ENCODE measurements at regions of chr3 and their contacts with region 1.

Region 1: DNA sequence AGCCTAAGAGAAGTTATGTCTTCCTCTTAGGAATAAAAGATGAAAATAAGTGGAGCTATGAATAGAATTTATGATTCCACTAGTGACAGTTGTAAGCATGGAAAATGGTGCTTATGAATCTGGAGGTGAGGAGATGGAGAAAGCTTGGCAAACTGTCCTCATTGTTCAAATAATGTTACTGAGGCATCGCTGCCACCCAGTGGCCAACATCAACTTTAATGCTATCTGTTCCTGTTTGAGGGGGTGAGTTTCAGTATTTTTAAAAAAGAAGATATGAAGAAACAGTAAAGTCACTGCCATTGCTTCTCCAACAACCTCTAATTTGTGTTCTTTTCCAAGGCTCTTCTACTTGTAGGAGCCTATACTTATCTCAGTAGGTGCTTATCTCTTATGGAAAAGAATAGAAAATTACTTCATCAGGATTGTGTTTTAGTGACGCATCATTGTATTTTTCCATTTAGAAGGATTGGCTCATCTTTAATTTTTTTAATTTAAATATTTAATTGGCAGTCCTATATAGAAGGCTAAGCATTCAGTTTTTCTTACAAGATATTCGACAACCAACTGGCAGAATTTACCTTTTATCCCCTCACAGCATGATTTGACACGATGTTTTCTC is 260.4 kb upstream of the P2RY1 start:
- DNase-seq: peak; percentile 26
- ATAC-seq: peak; percentile 95
- H3K4me3 ChIP-seq: no peak overlapping the region
- H3K27ac ChIP-seq: no peak overlapping the region
- H3K4me1 ChIP-seq: no peaks in the 10 kb centered on the region; the same call in 1 of the 2 replicates
- H3K27me3 ChIP-seq: no peaks in the 10 kb centered on the region
- CTCF ChIP-seq: peak; percentile 38 to 69 (median 52); a peak in 5 of 6 replicates
- EP300 ChIP-seq: no peak
- POLR2A ChIP-seq: no peak
- RAD21 ChIP-seq: peak; percentile 87

Region 2: GRCh38 chr3:152452318-152452717 is 122.3 kb before region 1 on chr3:
- CTCF ChIA-PET with region 1: no interaction called
- POLR2A ChIA-PET with region 1: no interaction called
- RAD21 ChIA-PET with region 1: no interaction called
- SMC1A ChIA-PET with region 1: no interaction called
- in situ Hi-C with region 1: no loop called
- intact Hi-C with region 1: no loop called
- DNase-seq: no peak
- ATAC-seq: peak; percentile 24; the same call in 2 of the 3 replicates
- H3K4me3 ChIP-seq: no peak overlapping the region
- H3K27ac ChIP-seq: no peak overlapping the region
- H3K4me1 ChIP-seq: no peaks in the 10 kb centered on the region
- H3K27me3 ChIP-seq: no peaks in the 10 kb centered on the region
- CTCF ChIP-seq: no peak
- EP300 ChIP-seq: no peak
- POLR2A ChIP-seq: no peak
- RAD21 ChIP-seq: no peak

Region 3: GRCh38 chr3:152519376-152519775 is 55.2 kb before region 1 on chr3:
- CTCF ChIA-PET with region 1: interaction called, 48 read pairs
- POLR2A ChIA-PET with region 1: no interaction called
- RAD21 ChIA-PET with region 1: interaction called, 13 read pairs
- SMC1A ChIA-PET with region 1: interaction called, 18 read pairs
- in situ Hi-C with region 1: no loop called
- intact Hi-C with region 1: loop called (anchors 1 kb)
- DNase-seq: no peak
- ATAC-seq: peak; percentile 72
- H3K4me3 ChIP-seq: no peak overlapping the region
- H3K27ac ChIP-seq: no peak overlapping the region
- H3K4me1 ChIP-seq: peaks cover 5% of the 10 kb centered on the region
- H3K27me3 ChIP-seq: no peaks in the 10 kb centered on the region
- CTCF ChIP-seq: no peak
- EP300 ChIP-seq: no peak; a peak in 1 of 4 replicates
- POLR2A ChIP-seq: no peak
- RAD21 ChIP-seq: no peak

Region 4: DNA sequence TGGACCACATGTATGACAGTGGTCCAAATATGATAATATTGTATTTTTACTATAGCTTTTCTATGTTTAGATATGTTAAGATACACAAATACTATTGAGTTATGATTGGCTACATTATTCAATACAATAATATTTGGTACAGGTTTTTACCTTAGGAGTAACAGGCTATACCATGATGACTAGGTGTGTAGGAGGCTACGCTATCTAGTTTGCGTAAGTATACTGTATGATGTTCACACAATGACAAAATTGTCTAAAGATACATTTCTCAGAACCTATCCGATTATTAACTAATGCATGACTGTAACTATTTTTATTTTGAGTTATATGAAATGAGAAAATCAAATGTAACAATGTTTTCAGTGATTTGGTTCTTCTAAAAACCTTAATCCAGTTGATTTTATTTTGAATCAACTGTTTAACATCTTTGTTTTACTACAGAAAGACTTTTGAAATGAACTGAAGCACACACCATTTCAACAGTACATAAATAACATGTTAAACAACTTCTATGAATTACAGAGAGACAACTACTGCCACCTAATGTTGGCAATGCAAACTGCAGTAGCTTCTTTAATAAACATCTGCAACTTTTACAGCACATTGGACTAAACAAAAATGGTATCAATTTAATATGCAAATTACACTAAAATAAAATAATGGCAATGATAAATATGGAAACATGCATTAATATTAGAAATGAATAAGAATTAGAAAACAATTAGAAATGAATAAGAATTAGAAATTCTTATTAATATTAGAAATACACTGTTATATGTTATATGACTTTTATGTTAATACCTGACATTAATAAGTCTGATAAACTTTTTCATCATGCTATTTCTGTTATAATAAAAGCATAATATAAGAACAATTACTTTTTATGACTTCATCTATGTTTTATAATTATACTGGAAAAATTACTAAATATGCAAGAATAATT is 50.1 kb before region 1 on chr3:
- CTCF ChIA-PET with region 1: interaction called, 48 read pairs
- POLR2A ChIA-PET with region 1: no interaction called
- RAD21 ChIA-PET with region 1: interaction called, 13 read pairs
- SMC1A ChIA-PET with region 1: interaction called, 18 read pairs
- in situ Hi-C with region 1: no loop called
- intact Hi-C with region 1: loop called (anchors 1 kb)
- DNase-seq: no peak
- ATAC-seq: peak; percentile 74
- H3K4me3 ChIP-seq: no peak overlapping the region
- H3K27ac ChIP-seq: no peak overlapping the region
- H3K4me1 ChIP-seq: no peaks in the 10 kb centered on the region
- H3K27me3 ChIP-seq: no peaks in the 10 kb centered on the region
- CTCF ChIP-seq: peak; percentile 69 to 80 (median 79); a peak in 5 of 6 replicates
- EP300 ChIP-seq: no peak
- POLR2A ChIP-seq: no peak
- RAD21 ChIP-seq: peak; percentile 90

Region 5: DNA sequence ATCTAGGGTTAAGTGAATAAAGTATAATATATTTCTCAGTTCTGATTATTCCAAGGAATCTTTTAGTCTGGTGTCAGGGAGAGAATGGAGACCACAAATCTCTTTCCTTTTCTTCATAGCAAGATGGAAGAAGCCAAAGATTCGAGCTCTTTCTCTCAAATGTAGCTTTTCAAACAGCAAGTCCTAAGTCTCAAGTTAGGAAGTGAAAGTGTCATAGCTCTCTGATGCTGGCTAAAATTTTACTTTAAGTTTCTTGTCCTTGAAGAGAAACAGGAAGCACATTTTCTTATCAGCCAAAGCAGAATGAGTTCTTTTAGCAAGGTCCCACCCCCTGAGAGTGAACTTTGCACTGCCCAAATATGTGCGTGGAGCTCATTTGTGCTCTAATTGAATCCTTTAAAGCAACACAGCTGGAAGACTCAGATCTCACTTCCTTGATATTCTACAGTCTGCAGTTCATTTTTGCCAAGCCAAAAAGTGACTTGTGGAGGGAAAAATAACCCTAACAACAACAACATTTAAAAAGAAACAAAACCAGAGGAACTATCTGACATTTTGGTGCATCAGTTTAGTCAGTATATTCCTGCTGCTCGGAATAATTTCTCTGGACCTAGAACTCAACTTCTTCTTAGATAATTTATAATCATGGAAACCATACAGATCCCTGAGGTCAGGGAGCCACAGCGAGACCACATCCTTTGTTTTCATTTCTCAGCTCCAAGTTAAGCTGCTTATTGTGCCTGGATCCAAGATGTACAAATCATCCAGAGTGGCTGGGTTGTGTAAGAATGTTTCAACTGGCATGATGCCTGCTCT is 21.6 kb after region 1 on chr3:
- CTCF ChIA-PET with region 1: interaction called, 31 read pairs
- POLR2A ChIA-PET with region 1: no interaction called
- RAD21 ChIA-PET with region 1: interaction called, 11 read pairs
- SMC1A ChIA-PET with region 1: interaction called, 32 read pairs
- in situ Hi-C with region 1: no loop called
- intact Hi-C with region 1: no loop called
- DNase-seq: peak; percentile 88
- ATAC-seq: peak; percentile 99
- H3K4me3 ChIP-seq: no peak overlapping the region
- H3K27ac ChIP-seq: peak overlapping the region; percentile 16
- H3K4me1 ChIP-seq: peaks cover 7% of the 10 kb centered on the region
- H3K27me3 ChIP-seq: no peaks in the 10 kb centered on the region
- CTCF ChIP-seq: no peak
- EP300 ChIP-seq: no peak; a peak in 2 of 4 replicates
- POLR2A ChIP-seq: no peak
- RAD21 ChIP-seq: no peak

Region 6: GRCh38 chr3:153469162-153469561 is 894.6 kb after region 1 on chr3:
- CTCF ChIA-PET with region 1: no interaction called
- POLR2A ChIA-PET with region 1: no interaction called
- RAD21 ChIA-PET with region 1: no interaction called
- SMC1A ChIA-PET with region 1: no interaction called
- in situ Hi-C with region 1: no loop called
- intact Hi-C with region 1: no loop called
- DNase-seq: no peak
- ATAC-seq: no peak
- H3K4me3 ChIP-seq: no peak overlapping the region
- H3K27ac ChIP-seq: no peak overlapping the region
- H3K4me1 ChIP-seq: no peaks in the 10 kb centered on the region
- H3K27me3 ChIP-seq: no peaks in the 10 kb centered on the region
- CTCF ChIP-seq: no peak
- EP300 ChIP-seq: no peak
- POLR2A ChIP-seq: no peak
- RAD21 ChIP-seq: no peak

Measured in GM12878 (cell line).